ENCODE measurements at regions of chr10 and their contacts with region 1.

Region 1: DNA sequence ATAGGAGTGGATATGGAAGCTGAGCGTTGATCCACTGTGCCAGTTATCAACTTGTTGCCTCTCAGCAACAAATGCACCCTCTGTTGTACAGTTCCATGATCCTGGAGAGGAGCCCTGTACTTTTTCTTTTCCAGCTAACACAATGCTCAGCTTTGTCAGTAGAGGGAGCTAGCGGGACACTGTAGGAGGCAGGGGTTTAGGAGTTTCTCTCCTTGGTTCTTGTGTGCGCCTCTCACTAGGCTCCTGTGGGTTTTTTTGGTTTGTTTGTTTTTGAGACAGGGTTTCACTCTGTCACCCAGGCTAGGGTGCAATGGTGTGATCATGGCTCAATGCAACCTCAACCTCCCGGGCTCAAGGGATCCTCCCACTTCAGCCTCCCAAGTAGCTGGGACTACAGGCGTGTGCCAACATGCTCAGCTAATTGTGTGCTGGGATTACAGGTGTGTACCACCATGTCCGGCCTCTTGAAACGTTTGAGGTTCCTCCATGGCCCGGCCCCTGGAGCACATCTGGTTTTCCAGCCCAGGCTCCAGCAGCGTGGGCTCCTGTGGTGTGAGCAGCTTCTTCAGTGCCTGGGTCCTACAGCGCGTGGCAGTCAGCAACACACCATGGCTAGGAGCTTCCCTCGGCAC is 12.0 kb upstream of the MARVELD1 start:
- DNase-seq: peak; percentile 65
- H3K4me3 Mint-ChIP-seq: no peak overlapping the region
- H3K27ac Mint-ChIP-seq: no peak overlapping the region
- H3K4me1 Mint-ChIP-seq: no peaks in the 10 kb centered on the region
- H3K27me3 Mint-ChIP-seq: peaks cover 27% of the 10 kb centered on the region

Region 2: GRCh38 chr10:97676770-97677581 is 24.6 kb before region 1 on chr10:
- CTCF ChIA-PET with region 1: interaction called, 27 read pairs
- DNase-seq: peak; percentile 58
- H3K4me3 Mint-ChIP-seq: no peak overlapping the region
- H3K27ac Mint-ChIP-seq: peak overlapping the region; percentile 34
- H3K4me1 Mint-ChIP-seq: peaks cover 13% of the 10 kb centered on the region
- H3K27me3 Mint-ChIP-seq: no peaks in the 10 kb centered on the region

Region 3: GRCh38 chr10:97686962-97687784 is 14.4 kb before region 1 on chr10 and contains the start of gene AVPI1:
- CTCF ChIA-PET with region 1: interaction called, 32 read pairs
- DNase-seq: peak; percentile 97
- H3K4me3 Mint-ChIP-seq: peak within 1 kb of the TSS; percentile 80
- H3K27ac Mint-ChIP-seq: peak within 1 kb of the TSS; percentile 22
- H3K4me1 Mint-ChIP-seq: peaks cover 18% of the 10 kb centered on the region
- H3K27me3 Mint-ChIP-seq: peaks cover 16% of the 10 kb centered on the region

Region 4: DNA sequence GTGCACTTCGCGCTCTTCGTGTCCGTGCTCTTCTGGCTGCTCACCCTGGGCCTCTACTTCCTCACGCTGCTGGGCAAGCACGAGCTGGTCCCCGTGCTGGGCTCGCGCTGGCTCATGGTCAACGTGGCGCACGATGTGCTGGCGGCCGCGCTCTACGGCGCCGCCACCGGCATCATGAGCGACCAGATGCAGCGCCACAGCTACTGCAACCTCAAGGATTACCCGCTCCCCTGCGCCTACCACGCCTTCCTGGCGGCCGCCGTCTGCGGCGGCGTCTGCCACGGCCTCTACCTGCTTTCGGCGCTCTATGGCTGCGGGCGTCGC is 12.5 kb after region 1 on chr10:
- CTCF ChIA-PET with region 1: interaction called, 19 read pairs
- DNase-seq: peak; percentile 71
- H3K4me3 Mint-ChIP-seq: peak overlapping the region; percentile 100
- H3K27ac Mint-ChIP-seq: peak overlapping the region; percentile 84
- H3K4me1 Mint-ChIP-seq: peaks cover 17% of the 10 kb centered on the region
- H3K27me3 Mint-ChIP-seq: peaks cover 90% of the 10 kb centered on the region

Region 5: GRCh38 chr10:98045785-98046389 is 344.3 kb after region 1 on chr10:
- CTCF ChIA-PET with region 1: interaction called, 35 read pairs
- DNase-seq: peak; percentile 71
- H3K4me3 Mint-ChIP-seq: no peak overlapping the region
- H3K27ac Mint-ChIP-seq: no peak overlapping the region
- H3K4me1 Mint-ChIP-seq: no peaks in the 10 kb centered on the region
- H3K27me3 Mint-ChIP-seq: peaks cover 41% of the 10 kb centered on the region